ENCODE measurements at regions of chr11 and their contacts with region 1.

Region 1: GRCh38 chr11:2685566-2686359 is 14.0 kb downstream of the KCNQ1OT1 start:
- DNase-seq: peak; percentile 47

Region 2: DNA sequence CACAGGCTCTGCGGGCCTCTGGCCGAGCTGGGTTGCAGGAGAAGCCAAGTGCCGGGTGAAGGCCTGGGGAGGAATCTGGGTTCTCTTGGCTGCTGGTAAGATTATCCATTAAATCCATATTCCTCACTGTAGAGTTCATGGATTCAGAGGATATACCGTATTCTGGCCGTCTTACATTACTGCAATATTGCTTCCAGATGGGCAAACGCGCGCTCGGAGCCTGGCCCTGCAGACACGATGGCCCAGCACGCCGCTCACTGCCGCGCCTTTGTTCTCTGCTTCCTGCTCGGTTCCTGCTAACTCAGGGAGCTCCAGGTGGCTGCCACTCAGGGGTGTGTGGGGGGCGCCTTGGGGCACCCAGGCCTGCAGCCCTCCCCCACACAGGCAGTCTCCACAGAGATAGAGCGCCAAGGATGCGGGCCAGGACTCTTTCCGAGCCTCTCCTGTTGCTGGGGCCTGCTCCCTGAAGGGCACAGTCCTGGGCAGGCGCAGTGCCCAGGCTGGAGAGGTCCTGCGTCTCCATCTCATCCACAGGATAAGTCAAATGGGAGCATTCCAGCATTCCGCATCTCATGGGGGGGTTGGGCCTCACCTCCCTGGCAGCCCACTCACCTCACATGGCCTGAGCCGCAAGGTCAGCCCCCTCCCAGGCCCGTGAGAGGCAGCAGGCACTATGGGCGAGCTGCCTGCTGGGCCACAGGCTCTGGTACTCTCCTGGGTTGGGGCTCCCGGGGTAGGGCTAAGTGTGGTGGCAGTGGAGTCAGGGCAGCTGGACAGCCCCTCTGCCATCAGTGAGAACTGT is 28.1 kb after region 1 on chr11:
- intact Hi-C with region 1: no loop called
- DNase-seq: no peak

Region 3: GRCh38 chr11:2730272-2731129 is 44.7 kb after region 1 on chr11:
- intact Hi-C with region 1: loop called (anchors 2 kb)
- DNase-seq: no peak